Heart right ventricle (tissue), 16 donors: ENCODE measurements at regions of chr12 and their contacts with region 1.

Region 1: GRCh38 chr12:99005601-99006000 is 360.5 kb downstream of the APAF1 start:
- DNase-seq: no peak
- ATAC-seq: no peak
- H3K4me3 ChIP-seq: no peak overlapping the region
- H3K27ac ChIP-seq: no peak overlapping the region
- H3K4me1 ChIP-seq: no peaks in the 10 kb centered on the region
- H3K27me3 ChIP-seq: peaks cover 0 to 4% (median 0%) of the 10 kb centered on the region in 7 donors
- CTCF ChIP-seq: no peak

Region 2: DNA sequence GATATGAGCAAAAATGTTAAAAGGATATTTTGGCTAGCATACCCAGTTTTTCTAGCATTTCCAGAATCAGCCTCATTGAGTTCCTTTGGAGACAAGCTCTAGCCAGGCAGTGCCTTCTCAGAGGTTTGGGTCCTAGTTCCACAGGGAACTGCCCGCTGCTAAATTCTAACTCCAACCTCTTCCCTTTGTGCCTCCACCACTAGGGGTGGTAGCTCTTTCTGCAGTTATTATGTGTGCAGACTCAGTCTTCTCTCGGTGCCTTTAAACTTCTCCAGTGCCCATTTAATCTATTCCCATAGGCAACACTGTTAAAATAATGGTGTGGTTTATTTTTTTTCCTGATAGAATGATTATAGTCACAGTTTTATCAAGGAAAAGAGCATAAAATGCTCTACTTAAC is 433.6 kb before region 1 on chr12:
- intact Hi-C with region 1: loop called in 1 of 10 experiments (anchors 5 kb)
- DNase-seq: no peak
- ATAC-seq: peak in 2 of 8 donors; percentile 33 to 44
- H3K4me3 ChIP-seq: no peak overlapping the region
- H3K27ac ChIP-seq: no peak overlapping the region
- H3K4me1 ChIP-seq: peaks cover 0 to 5% (median 0%) of the 10 kb centered on the region in 9 donors
- H3K27me3 ChIP-seq: no peaks in the 10 kb centered on the region
- CTCF ChIP-seq: peak in 4 of 9 donors; percentile 13 to 28 (median 18)